GM13977 (cell line): ENCODE measurements at regions of chr2 and their contacts with region 1.

Region 1: GRCh38 chr2:230007931-230008707 is 60.6 kb downstream of the SLC16A14 start:
- DNase-seq: peak; percentile 61
- CTCF ChIP-seq: peak; percentile 78

Region 2: DNA sequence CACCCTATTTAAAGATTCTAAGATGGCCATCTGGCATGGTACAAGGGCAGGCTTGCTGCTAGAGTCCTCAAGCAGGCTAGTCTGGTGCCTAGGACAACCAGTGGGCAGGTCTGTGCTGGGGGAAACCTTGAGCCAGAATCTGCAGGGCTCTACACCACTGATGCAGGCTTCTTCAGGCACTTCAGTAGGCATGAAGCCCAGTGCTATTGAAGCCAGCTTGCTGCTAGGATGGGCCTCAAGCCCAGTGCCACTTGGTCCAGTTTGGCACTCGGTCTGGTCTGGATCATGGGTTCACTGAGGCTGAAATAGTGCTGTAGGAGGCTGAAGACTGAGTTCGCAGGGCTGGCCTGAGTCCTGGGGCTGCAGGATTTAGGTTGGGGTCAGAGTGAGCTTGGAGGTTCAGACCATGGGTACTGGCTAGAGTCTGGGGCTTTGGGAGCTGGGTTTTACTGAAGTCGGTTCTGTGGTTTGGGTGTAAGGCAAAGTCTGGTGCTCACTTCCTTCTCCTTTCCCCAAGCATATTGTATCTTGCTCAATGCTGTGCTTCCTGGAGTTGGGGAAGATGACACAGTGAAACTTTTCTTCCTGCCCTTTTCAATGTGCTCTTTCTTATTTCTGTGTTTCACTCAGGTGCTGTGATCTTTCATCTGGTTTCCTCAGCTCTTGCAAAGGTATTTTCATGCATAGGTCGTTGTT is 449.1 kb after region 1 on chr2:
- in situ Hi-C with region 1: no loop called
- DNase-seq: no peak
- CTCF ChIP-seq: no peak

Region 3: GRCh38 chr2:230824406-230824978 is 816.4 kb after region 1 on chr2:
- in situ Hi-C with region 1: loop called (anchors 25 kb)
- DNase-seq: peak; percentile 80
- CTCF ChIP-seq: peak; percentile 59